Right cardiac atrium (tissue), 5 donors: ENCODE measurements at regions of chr3 and their contacts with region 1.

Region 1: DNA sequence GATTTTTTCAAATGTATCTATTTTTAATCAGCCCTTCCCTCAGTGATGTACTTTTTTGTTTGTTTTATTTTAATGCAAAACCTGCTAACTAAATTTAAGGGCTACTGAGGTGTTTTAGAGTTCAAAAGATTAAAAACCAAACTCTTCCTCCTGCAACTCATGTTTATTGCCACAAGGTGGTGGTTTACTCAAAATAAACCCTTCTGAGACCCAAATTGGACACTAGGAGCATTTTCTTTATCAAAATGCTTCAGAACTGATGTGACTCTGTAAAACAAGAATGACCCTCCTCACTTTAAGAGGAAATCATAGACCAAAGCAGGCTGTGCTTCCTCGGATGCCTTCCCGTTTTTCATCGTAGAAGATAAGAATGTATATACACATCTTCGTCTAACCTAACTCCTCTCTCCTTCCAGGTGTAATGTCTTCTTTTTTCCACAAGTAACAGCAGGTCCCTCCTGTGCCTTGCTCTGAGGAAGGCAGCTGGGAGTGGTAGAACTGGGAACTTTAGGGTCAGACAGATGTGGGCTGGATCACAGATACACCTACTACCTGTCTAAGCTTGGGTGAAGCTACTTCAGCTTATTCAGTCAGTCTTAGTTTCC is 2.9 kb upstream of the NME9 start:
- DNase-seq: no peak
- ATAC-seq: no peak
- H3K4me3 ChIP-seq: no peak overlapping the region
- H3K27ac ChIP-seq: no peak overlapping the region
- H3K4me1 ChIP-seq: peaks cover 2% of the 10 kb centered on the region
- H3K27me3 ChIP-seq: no peaks in the 10 kb centered on the region

Region 2: GRCh38 chr3:138114988-138115971 is 217.3 kb before region 1 on chr3 and contains the start of gene DZIP1L:
- intact Hi-C with region 1: no loop called
- DNase-seq: peak; percentile 62 to 86 (median 86)
- ATAC-seq: peak; percentile 96 to 97
- H3K4me3 ChIP-seq: peak within 1 kb of the TSS; percentile 86
- H3K27ac ChIP-seq: peak within 1 kb of the TSS; percentile 77
- H3K4me1 ChIP-seq: peaks cover 6% of the 10 kb centered on the region
- H3K27me3 ChIP-seq: no peaks in the 10 kb centered on the region
- total RNA-seq, gene DZIP1L: 3.7 to 6.2 (median 4.2) TPM

Region 3: DNA sequence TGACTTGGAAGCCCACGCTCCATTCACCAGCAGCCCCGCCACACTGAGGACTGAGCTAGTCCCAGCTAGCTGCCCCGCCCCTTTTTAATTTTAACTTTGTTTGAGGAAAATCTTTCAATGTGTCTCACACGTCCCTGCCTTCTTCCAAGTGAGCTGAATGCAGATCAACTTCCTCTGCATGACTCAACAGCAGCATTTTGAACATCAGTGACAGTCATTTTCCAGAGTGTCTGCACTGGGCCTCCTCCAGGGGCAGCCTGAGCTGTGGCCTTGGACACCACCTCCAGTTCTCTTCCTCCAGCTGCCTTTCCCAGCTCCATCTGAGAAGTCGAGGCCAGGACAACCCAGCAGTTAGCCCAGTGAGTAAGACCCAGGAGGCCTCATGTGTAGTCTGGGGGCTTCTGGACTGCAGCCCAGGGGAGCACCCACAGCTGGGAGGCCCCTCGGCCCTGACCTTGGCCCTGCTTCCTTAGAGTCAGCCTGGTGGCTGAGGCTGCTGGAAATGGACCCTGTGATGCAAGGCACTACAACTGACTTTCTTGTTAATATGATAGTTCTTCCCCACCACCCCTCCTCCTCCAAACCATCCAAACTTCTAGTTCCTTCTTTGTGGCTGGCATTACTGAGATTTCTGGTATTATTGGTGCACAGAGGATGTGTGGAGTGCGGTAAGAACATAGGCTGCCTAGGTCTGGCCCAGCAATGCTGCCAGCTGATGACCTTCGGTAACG is 80.4 kb after region 1 on chr3:
- intact Hi-C with region 1: loop called in 1 of 4 experiments (anchors 5 kb)
- DNase-seq: no peak
- ATAC-seq: peak in 1 of 2 donors; percentile 34
- H3K4me3 ChIP-seq: no peak overlapping the region
- H3K27ac ChIP-seq: no peak overlapping the region
- H3K4me1 ChIP-seq: no peaks in the 10 kb centered on the region
- H3K27me3 ChIP-seq: no peaks in the 10 kb centered on the region

Region 4: GRCh38 chr3:138434276-138434874 is 101.8 kb after region 1 on chr3 and contains the start of gene ESYT3:
- intact Hi-C with region 1: loop called in 1 of 4 experiments (anchors 10 kb)
- DNase-seq: peak; percentile 77 to 92 (median 90)
- ATAC-seq: peak; percentile 93 to 94
- H3K4me3 ChIP-seq: peak within 1 kb of the TSS; percentile 23
- H3K27ac ChIP-seq: no peak within 1 kb of the TSS
- H3K4me1 ChIP-seq: peaks cover 4% of the 10 kb centered on the region
- H3K27me3 ChIP-seq: no peaks in the 10 kb centered on the region
- total RNA-seq, gene ESYT3: 1.2 to 2.4 (median 1.6) TPM